Left ventricle myocardium inferior (tissue), 1 donor: ENCODE measurements at regions of chr6 and their contacts with region 1.

Region 1: DNA sequence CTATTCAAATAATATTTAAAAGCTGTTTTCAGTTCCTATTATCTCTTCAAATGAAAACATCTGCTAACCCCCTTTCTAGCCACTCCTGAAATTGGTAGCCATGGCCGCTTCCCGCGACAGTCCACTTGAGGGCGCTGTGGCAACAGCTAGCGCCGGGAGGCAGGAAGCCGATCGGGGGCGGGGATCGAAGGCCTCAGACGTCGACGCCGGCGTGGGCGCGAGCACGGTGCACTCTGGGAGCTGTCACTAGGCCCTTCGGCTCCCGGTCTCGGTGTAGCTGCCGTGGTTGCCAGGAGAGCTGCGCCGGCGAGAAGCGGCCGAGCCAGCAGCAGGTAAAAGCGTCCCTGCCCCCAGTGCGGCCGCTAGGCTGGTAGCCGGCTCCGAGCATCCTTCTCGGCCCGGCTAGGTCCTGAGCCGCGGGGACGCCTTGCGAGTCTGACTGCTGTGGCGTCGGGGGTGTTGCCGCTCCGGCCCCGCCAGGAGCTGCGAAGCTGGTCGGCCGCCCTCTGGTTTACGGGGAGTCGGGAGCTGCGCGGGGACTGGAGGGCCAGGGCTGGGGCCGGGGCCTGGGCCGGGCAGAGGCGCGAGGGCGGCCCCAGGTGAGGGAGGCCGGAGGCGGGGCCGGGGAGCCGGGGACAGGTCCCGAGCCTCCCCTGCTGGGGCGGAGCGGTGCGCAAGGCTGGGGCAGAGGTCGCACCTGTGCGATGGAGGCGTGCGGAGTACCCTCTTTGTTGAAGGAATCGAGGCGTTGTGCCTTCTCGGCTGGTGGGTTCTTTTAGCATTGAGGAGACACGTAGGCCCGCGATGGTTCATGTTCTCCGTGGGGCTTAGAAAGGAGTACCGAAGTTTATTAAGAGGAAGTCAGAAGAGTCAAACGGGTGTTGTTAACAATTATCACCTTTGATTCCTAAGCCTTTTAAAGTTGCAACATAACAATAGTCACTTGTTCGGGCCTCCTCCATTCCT is at the start of gene DOP1A:
- DNase-seq: peak; percentile 97
- H3K4me3 ChIP-seq: peak within 1 kb of the TSS; percentile 80
- H3K27ac ChIP-seq: peak within 1 kb of the TSS; percentile 84
- H3K4me1 ChIP-seq: peaks cover 74% of the 10 kb centered on the region
- H3K27me3 ChIP-seq: no peaks in the 10 kb centered on the region
- CTCF ChIP-seq: peak; percentile 99
- total RNA-seq, gene DOP1A: 18.1 TPM

Region 2: GRCh38 chr6:83215131-83216047 is 147.7 kb after region 1 on chr6:
- intact Hi-C with region 1: loop called (anchors 2 kb)
- DNase-seq: peak; percentile 39
- H3K4me3 ChIP-seq: no peak overlapping the region
- H3K27ac ChIP-seq: no peak overlapping the region
- H3K4me1 ChIP-seq: peaks cover 6% of the 10 kb centered on the region
- H3K27me3 ChIP-seq: no peaks in the 10 kb centered on the region
- CTCF ChIP-seq: peak; percentile 88

Region 3: GRCh38 chr6:83365931-83366330 is 298.2 kb after region 1 on chr6:
- intact Hi-C with region 1: no loop called
- DNase-seq: no peak
- H3K4me3 ChIP-seq: no peak overlapping the region
- H3K27ac ChIP-seq: no peak overlapping the region
- H3K4me1 ChIP-seq: peaks cover 7% of the 10 kb centered on the region
- H3K27me3 ChIP-seq: no peaks in the 10 kb centered on the region
- CTCF ChIP-seq: no peak